T-cell (primary cell): ENCODE measurements at regions of chr17 and their contacts with region 1.

Region 1: GRCh38 chr17:72725433-72726068 is 366.9 kb downstream of the SLC39A11 start:
- DNase-seq: peak in 29 of 35 experiments; percentile 6 to 68 (median 27)
- ATAC-seq: peak in 1 of 4 experiments; percentile 35
- H3K4me3 ChIP-seq: no peak overlapping the region
- H3K4me3 Mint-ChIP-seq: peak overlapping the region in 2 of 3 donors; percentile 13 to 55
- H3K27ac ChIP-seq: no peak overlapping the region
- H3K27ac Mint-ChIP-seq: peak overlapping the region; percentile 97
- H3K4me1 ChIP-seq: peaks cover 10 to 33% of the 10 kb centered on the region in 2 experiments
- H3K4me1 Mint-ChIP-seq: peaks cover 33 to 35% (median 33%) of the 10 kb centered on the region in 3 donors
- H3K27me3 ChIP-seq: no peaks in the 10 kb centered on the region
- H3K27me3 Mint-ChIP-seq: no peaks in the 10 kb centered on the region

Region 2: GRCh38 chr17:72556944-72557826 is 168.4 kb before region 1 on chr17:
- CTCF ChIA-PET with region 1: interaction called, 4 to 10 read pairs
- POLR2A ChIA-PET with region 1: no interaction called
- DNase-seq: peak in 31 of 35 experiments; percentile 8 to 67 (median 35)
- ATAC-seq: peak; percentile 27 to 51 (median 44)
- H3K4me3 ChIP-seq: no peak overlapping the region
- H3K4me3 Mint-ChIP-seq: no peak overlapping the region
- H3K27ac ChIP-seq: no peak overlapping the region
- H3K27ac Mint-ChIP-seq: no peak overlapping the region
- H3K4me1 ChIP-seq: peaks cover 0 to 4% of the 10 kb centered on the region in 2 experiments
- H3K4me1 Mint-ChIP-seq: peaks cover 0 to 2% (median 0%) of the 10 kb centered on the region in 3 donors
- H3K27me3 ChIP-seq: peaks cover 0 to 7% of the 10 kb centered on the region in 2 experiments
- H3K27me3 Mint-ChIP-seq: peaks cover 1 to 4% of the 10 kb centered on the region in 2 donors

Region 3: DNA sequence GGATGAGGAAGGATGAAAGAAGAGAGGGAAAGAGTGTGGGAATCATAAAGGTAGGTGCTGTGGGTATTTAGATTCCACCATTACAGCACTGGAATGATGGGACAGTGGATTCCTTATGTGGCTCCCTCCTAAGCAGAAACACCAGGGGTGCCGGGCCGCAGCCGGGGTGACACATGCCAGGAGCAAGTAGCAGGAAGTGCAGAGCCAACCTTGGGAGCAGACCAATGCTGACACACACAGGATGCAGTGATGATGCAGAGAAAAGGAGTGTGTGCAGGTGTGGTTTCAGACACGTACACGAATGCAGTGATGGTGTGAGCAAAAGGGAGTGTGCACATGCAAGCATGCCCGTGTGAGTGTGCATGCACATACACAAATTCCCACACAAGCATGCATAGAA is 29.0 kb after region 1 on chr17:
- CTCF ChIA-PET with region 1: interaction called in 1 of 2 experiments, 11 read pairs
- POLR2A ChIA-PET with region 1: no interaction called
- DNase-seq: no peak
- ATAC-seq: no peak
- H3K4me3 ChIP-seq: no peak overlapping the region
- H3K4me3 Mint-ChIP-seq: no peak overlapping the region
- H3K27ac ChIP-seq: no peak overlapping the region
- H3K27ac Mint-ChIP-seq: no peak overlapping the region
- H3K4me1 ChIP-seq: no peaks in the 10 kb centered on the region
- H3K4me1 Mint-ChIP-seq: no peaks in the 10 kb centered on the region
- H3K27me3 ChIP-seq: no peaks in the 10 kb centered on the region
- H3K27me3 Mint-ChIP-seq: no peaks in the 10 kb centered on the region

Region 4: GRCh38 chr17:72788950-72789585 is 63.5 kb after region 1 on chr17:
- CTCF ChIA-PET with region 1: no interaction called
- POLR2A ChIA-PET with region 1: no interaction called
- DNase-seq: no peak
- ATAC-seq: no peak
- H3K4me3 ChIP-seq: no peak overlapping the region
- H3K4me3 Mint-ChIP-seq: no peak overlapping the region
- H3K27ac ChIP-seq: no peak overlapping the region
- H3K27ac Mint-ChIP-seq: no peak overlapping the region
- H3K4me1 ChIP-seq: no peaks in the 10 kb centered on the region
- H3K4me1 Mint-ChIP-seq: no peaks in the 10 kb centered on the region
- H3K27me3 ChIP-seq: no peaks in the 10 kb centered on the region
- H3K27me3 Mint-ChIP-seq: no peaks in the 10 kb centered on the region

Region 5: GRCh38 chr17:73156166-73156840 is 430.8 kb after region 1 on chr17:
- CTCF ChIA-PET with region 1: interaction called, 6 to 25 read pairs
- POLR2A ChIA-PET with region 1: no interaction called
- DNase-seq: peak in 34 of 35 experiments; percentile 7 to 62 (median 35)
- ATAC-seq: peak; percentile 73 to 85 (median 82)
- H3K4me3 ChIP-seq: no peak overlapping the region
- H3K4me3 Mint-ChIP-seq: no peak overlapping the region
- H3K27ac ChIP-seq: no peak overlapping the region
- H3K27ac Mint-ChIP-seq: no peak overlapping the region
- H3K4me1 ChIP-seq: peaks cover 2 to 5% of the 10 kb centered on the region in 2 experiments
- H3K4me1 Mint-ChIP-seq: peaks cover 7 to 13% (median 12%) of the 10 kb centered on the region in 3 donors
- H3K27me3 ChIP-seq: peaks cover 3 to 31% of the 10 kb centered on the region in 2 experiments
- H3K27me3 Mint-ChIP-seq: peaks cover 17 to 24% of the 10 kb centered on the region in 2 donors

Region 6: GRCh38 chr17:73192894-73193701 is 467.5 kb after region 1 on chr17 and contains the start of gene COG1:
- CTCF ChIA-PET with region 1: interaction called, 4 to 11 read pairs
- POLR2A ChIA-PET with region 1: no interaction called
- DNase-seq: peak; percentile 60 to 93 (median 83)
- ATAC-seq: peak; percentile 89 to 95 (median 90)
- H3K4me3 ChIP-seq: peak within 1 kb of the TSS; percentile 81 to 89
- H3K4me3 Mint-ChIP-seq: peak within 1 kb of the TSS; percentile 94 to 97 (median 96)
- H3K27ac ChIP-seq: peak within 1 kb of the TSS; percentile 75
- H3K27ac Mint-ChIP-seq: peak within 1 kb of the TSS; percentile 95
- H3K4me1 ChIP-seq: peaks cover 8 to 31% of the 10 kb centered on the region in 2 experiments
- H3K4me1 Mint-ChIP-seq: peaks cover 29 to 41% (median 34%) of the 10 kb centered on the region in 3 donors
- H3K27me3 ChIP-seq: no peaks in the 10 kb centered on the region
- H3K27me3 Mint-ChIP-seq: no peaks in the 10 kb centered on the region
- total RNA-seq, gene COG1: 66.3 to 77.2 (median 73.3) TPM

Region 7: DNA sequence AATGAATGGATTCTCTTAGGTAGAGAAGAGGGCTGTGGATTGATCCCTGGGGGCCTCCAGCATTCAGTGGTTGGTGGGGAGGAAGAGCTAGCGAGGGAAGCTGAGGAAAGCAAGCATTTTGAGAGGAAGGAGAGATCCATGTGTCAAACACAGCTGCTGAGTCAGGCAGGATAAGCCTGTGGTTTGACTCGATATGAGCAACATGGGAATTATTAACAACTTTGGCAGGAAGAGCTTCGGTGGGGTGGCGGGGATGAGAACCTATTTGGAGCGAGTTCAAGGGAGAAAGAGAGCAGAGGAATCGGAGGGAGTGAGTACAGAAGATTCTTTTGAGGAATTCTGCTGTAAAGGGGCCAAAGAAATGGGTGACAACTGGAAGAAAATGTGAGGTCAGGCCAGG is 645.7 kb after region 1 on chr17:
- CTCF ChIA-PET with region 1: interaction called, 18 to 45 read pairs
- POLR2A ChIA-PET with region 1: no interaction called
- DNase-seq: no peak
- ATAC-seq: no peak
- H3K4me3 ChIP-seq: no peak overlapping the region
- H3K4me3 Mint-ChIP-seq: no peak overlapping the region
- H3K27ac ChIP-seq: no peak overlapping the region
- H3K27ac Mint-ChIP-seq: no peak overlapping the region
- H3K4me1 ChIP-seq: no peaks in the 10 kb centered on the region
- H3K4me1 Mint-ChIP-seq: no peaks in the 10 kb centered on the region
- H3K27me3 ChIP-seq: peaks cover 0 to 19% of the 10 kb centered on the region in 2 experiments
- H3K27me3 Mint-ChIP-seq: peaks cover 0 to 2% of the 10 kb centered on the region in 2 donors